Kidney (tissue), 22 donors: ENCODE measurements at regions of chr12 and their contacts with region 1.

Region 1: GRCh38 chr12:54404061-54405004 is 14.7 kb downstream of the ITGA5 start:
- DNase-seq: peak in 4 of 5 donors; percentile 61 to 74 (median 68)
- H3K4me3 ChIP-seq: no peak overlapping the region
- H3K27ac ChIP-seq: no peak overlapping the region
- H3K4me1 ChIP-seq: no peaks in the 10 kb centered on the region
- H3K27me3 ChIP-seq: no peaks in the 10 kb centered on the region
- CTCF ChIP-seq: peak; percentile 87

Region 2: GRCh38 chr12:53938326-53939140 is 465.8 kb before region 1 on chr12 and contains the start of gene HOXC13:
- intact Hi-C with region 1: no loop called
- DNase-seq: peak; percentile 93 to 97 (median 97)
- H3K4me3 ChIP-seq: no peak within 1 kb of the TSS
- H3K27ac ChIP-seq: no peak within 1 kb of the TSS
- H3K4me1 ChIP-seq: peaks cover 0 to 2% (median 0%) of the 10 kb centered on the region in 3 donors
- H3K27me3 ChIP-seq: peaks cover 80% of the 10 kb centered on the region
- CTCF ChIP-seq: no peak
- total RNA-seq, gene HOXC13: not detected

Region 3: DNA sequence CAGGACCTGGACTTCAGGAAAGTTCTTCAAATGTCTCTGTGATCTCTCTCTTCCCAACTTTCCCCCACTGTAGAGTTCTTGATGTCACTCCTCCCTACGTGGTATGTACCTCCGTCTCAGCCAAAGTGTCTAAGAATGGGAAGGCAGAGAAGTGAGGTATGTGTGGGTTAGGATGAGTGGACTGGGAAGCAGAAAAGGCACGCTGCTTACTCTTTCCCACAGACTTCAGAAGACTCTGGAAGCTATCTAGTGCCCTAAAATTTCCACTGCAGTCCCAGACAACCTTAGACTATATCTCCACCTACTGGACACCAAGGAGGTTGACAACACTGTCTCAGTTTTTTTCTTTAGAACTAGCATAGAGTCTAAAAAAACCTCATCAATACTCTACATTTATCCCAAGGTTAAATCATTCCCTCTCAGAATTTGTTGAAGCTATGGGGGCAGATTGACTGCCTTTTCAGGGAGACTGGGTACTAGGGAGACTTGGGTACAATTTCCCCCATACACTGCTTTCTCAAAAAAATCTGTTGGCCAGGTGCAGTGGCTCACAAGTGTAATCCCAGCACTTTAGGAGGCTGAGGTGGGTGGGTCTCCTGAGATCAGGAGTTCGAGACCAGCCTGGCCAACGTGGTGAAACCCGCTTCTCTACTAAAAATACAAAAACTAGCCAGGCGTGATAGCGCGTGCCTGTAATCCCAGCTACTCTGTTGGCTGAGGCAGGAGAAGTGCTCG is 35.4 kb after region 1 on chr12:
- intact Hi-C with region 1: loop called (anchors 5 kb)
- DNase-seq: peak in 2 of 5 donors; percentile 57 to 82
- H3K4me3 ChIP-seq: no peak overlapping the region
- H3K27ac ChIP-seq: no peak overlapping the region
- H3K4me1 ChIP-seq: no peaks in the 10 kb centered on the region
- H3K27me3 ChIP-seq: no peaks in the 10 kb centered on the region
- CTCF ChIP-seq: peak; percentile 80

Region 4: DNA sequence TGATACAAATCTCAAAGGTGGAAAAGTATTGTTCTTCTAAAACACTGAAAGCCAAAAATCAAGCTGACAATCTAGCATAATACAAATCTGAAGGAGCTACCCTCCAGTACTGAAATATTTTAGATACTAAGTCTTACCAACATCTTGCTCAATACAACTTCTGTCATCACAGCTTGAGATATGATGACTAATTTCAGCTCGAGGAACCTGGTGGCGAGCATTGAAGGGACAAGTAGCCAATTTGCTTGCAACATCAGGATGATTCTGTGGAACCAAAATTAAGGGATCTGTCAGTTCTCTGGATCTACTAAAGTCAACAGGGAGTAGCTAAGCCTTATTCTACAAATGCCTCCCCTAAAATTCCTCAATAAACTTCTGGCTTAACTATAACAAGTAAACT is 58.7 kb after region 1 on chr12:
- intact Hi-C with region 1: no loop called
- DNase-seq: no peak
- H3K4me3 ChIP-seq: no peak overlapping the region
- H3K27ac ChIP-seq: no peak overlapping the region
- H3K4me1 ChIP-seq: no peaks in the 10 kb centered on the region
- H3K27me3 ChIP-seq: no peaks in the 10 kb centered on the region
- CTCF ChIP-seq: no peak